A673 (cell line): ENCODE measurements at regions of chr1 and their contacts with region 1.

Region 1: GRCh38 chr1:32020339-32020738 is 6.7 kb downstream of the KHDRBS1 start:
- DNase-seq: no peak
- H3K4me3 ChIP-seq: no peak overlapping the region
- H3K27ac ChIP-seq: no peak overlapping the region
- H3K4me1 ChIP-seq: peaks cover 24% of the 10 kb centered on the region
- H3K27me3 ChIP-seq: no peaks in the 10 kb centered on the region
- CTCF ChIP-seq: no peak

Region 2: DNA sequence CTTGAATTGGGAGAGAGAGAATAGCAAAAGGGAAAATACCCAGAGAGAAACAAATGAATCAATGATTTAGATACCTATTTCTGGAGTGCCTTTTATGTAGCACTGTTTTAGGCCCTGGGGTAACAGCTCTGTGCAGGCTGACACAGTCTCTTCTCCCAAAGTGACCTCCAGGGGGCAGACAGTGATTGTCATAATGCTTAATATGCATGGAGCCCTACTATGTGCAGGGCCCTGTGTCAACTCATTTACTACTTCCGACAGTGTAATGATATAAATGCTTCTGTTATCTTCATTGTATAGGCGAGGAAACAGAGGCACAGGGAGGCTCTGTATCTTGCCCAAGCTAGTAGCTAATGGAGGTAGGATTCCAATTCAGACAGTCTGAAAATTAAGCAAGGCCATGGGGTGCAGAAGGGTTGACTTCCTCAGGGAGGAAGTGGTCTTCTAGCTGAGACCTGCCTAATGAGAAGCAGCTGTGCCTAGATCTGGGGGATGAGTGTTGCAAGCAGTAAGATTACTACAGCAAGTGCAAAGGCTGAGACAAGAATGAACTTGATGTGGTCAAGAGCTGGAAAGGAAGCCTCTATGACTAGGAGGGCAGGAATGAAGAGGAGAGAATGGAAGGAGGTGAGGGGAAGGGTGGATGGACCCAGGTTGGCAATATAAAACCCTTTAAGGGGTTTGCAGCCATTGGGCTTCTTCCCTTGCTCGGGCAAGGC is 623.5 kb before region 1 on chr1:
- CTCF ChIA-PET with region 1: no interaction called
- POLR2A ChIA-PET with region 1: no interaction called
- intact Hi-C with region 1: no loop called
- DNase-seq: no peak
- H3K4me3 ChIP-seq: no peak overlapping the region
- H3K27ac ChIP-seq: no peak overlapping the region
- H3K4me1 ChIP-seq: peaks cover 3% of the 10 kb centered on the region
- H3K27me3 ChIP-seq: no peaks in the 10 kb centered on the region
- CTCF ChIP-seq: peak; percentile 48

Region 3: GRCh38 chr1:31795801-31796621 is 224.3 kb before region 1 on chr1:
- CTCF ChIA-PET with region 1: no interaction called
- POLR2A ChIA-PET with region 1: no interaction called
- intact Hi-C with region 1: no loop called
- DNase-seq: peak; percentile 92
- H3K4me3 ChIP-seq: no peak overlapping the region
- H3K27ac ChIP-seq: no peak overlapping the region
- H3K4me1 ChIP-seq: peaks cover 34% of the 10 kb centered on the region
- H3K27me3 ChIP-seq: no peaks in the 10 kb centered on the region
- CTCF ChIP-seq: no peak

Region 4: GRCh38 chr1:32215629-32216480 is 195.5 kb after region 1 on chr1:
- CTCF ChIA-PET with region 1: no interaction called
- POLR2A ChIA-PET with region 1: interaction called, 10 read pairs
- intact Hi-C with region 1: no loop called
- DNase-seq: peak; percentile 76
- H3K4me3 ChIP-seq: no peak overlapping the region
- H3K27ac ChIP-seq: no peak overlapping the region
- H3K4me1 ChIP-seq: peaks cover 5% of the 10 kb centered on the region
- H3K27me3 ChIP-seq: no peaks in the 10 kb centered on the region
- CTCF ChIP-seq: peak; percentile 85